ENCODE measurements at regions of chr2 and their contacts with region 1.

Region 1: GRCh38 chr2:222993920-222994650 is 57.9 kb upstream of the KCNE4 start:
- DNase-seq: peak; percentile 93 to 96
- H3K4me3 ChIP-seq: peak overlapping the region; percentile 27 to 30
- H3K27ac ChIP-seq: peak overlapping the region; percentile 77 to 83
- H3K4me1 ChIP-seq: peaks cover 0 to 30% (median 16%) of the 10 kb centered on the region in 4 donors
- H3K27me3 ChIP-seq: no peaks in the 10 kb centered on the region
- CTCF ChIP-seq: peak in 1 of 2 experiments; percentile 21

Region 2: DNA sequence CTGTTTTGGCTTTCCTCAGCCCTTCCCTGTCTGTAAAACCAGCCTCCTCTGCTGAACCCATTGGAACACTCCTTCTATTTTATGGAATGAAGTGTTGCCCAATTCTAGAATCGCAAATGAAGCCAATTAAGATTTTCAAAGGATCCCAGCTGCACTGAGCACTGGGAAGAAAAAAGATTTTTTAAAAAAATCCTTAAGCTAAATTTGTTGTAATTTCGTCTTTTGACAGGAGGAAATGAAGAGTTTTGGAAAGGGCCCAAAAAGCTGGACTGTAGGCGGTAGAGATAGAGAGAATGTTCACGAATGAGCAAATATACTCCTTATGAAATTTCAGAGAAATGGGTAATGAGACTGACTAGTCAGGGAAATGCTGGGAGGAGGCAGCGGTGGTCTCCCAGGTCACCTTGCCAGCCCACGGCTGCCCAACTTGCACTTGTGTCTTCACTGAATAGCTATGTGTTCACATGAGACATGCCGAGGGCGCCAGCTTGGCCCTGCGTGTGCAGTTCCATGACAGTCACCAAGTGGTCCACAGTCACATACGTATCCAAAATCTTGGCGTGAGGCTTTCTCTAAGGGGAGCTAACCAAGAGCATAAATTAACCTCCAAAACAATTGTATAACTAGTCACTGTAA is 499.9 kb before region 1 on chr2:
- intact Hi-C with region 1: no loop called
- DNase-seq: no peak
- H3K4me3 ChIP-seq: no peak overlapping the region
- H3K27ac ChIP-seq: no peak overlapping the region
- H3K4me1 ChIP-seq: no peaks in the 10 kb centered on the region
- H3K27me3 ChIP-seq: no peaks in the 10 kb centered on the region
- CTCF ChIP-seq: no peak

Region 3: DNA sequence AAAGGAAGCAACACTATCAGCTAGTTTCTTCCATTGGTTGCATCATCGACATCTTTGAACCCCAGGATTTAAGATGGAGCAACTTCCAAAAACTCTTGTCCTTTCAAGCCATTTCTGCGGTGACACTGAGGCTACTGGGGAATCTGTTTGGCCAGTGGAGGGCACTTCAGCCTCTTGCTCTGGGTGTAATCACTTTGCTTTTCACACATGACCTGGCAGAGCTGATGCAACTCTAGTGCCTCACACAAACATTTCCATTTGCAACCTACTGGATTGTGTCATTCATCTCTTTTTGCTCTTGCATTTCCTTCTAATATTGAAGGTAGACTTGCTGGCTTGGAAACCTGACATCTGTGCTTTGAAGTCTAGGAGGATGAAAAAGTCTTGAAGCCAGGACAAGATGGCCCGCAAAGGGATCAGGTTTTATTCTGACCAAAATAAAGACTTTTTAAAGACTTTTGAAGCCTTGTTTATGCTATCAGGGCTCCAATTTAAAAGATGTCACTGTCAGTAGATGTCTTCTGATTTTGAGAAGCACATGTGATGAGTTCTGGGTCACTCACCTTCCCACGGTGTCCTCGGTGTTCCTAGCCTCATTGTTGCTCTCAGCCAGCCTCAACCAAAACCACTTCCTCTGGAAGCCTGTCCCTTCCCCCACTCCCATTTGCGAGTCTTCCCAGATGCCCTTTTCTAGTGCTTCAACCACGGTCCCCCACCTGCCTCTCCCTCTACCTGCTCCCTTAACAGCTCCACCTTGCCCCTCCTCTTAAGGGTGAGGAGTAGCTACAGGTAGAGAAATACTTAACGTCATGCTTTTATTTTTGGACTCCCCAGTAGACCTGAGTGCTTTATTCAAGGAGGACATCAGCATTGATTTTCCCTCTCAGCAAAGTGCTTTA is 11.8 kb before region 1 on chr2:
- intact Hi-C with region 1: no loop called
- DNase-seq: peak; percentile 72 to 85
- H3K4me3 ChIP-seq: no peak overlapping the region
- H3K27ac ChIP-seq: peak overlapping the region in 1 of 2 donors; percentile 20
- H3K4me1 ChIP-seq: peaks cover 0 to 34% (median 10%) of the 10 kb centered on the region in 4 donors
- H3K27me3 ChIP-seq: no peaks in the 10 kb centered on the region
- CTCF ChIP-seq: peak; percentile 63 to 72

Region 4: GRCh38 chr2:223036790-223037444 is 42.8 kb after region 1 on chr2:
- intact Hi-C with region 1: loop called (anchors 5 kb)
- DNase-seq: no peak
- H3K4me3 ChIP-seq: no peak overlapping the region
- H3K27ac ChIP-seq: no peak overlapping the region
- H3K4me1 ChIP-seq: peaks cover 0 to 13% (median 6%) of the 10 kb centered on the region in 4 donors
- H3K27me3 ChIP-seq: no peaks in the 10 kb centered on the region
- CTCF ChIP-seq: no peak